ENCODE measurements at regions of chr3 and their contacts with region 1.

Region 1: DNA sequence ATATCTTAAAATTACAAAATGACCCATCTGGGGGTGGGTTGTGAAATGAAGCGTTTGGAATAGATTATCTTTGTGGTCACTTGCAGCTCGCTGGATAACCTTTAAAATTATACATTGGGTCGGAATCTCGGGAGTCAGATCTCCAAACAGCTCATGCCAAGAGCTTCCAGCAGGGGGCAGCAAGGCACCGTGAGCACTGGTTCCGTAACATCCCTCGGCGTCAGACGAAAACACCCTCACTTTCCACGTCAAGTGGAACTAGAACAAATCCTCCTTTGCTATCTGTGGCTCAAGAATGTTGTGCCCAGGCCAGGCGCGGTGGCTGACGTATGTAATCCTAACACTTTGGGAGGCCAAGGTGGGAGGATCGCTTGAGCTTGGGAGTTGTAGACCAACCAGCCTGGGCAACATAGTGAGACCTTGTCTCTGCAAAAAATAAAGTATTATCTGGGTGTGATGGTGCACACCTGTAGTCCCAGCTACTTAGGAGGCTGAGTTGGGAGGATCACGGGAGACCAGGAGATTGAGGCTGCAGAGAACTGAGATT is 31.1 kb downstream of the UMPS start:
- DNase-seq: peak; percentile 79
- CTCF ChIP-seq: peak; percentile 92

Region 2: GRCh38 chr3:124333931-124334640 is 427.2 kb before region 1 on chr3:
- in situ Hi-C with region 1: no loop called
- DNase-seq: no peak
- CTCF ChIP-seq: no peak

Region 3: DNA sequence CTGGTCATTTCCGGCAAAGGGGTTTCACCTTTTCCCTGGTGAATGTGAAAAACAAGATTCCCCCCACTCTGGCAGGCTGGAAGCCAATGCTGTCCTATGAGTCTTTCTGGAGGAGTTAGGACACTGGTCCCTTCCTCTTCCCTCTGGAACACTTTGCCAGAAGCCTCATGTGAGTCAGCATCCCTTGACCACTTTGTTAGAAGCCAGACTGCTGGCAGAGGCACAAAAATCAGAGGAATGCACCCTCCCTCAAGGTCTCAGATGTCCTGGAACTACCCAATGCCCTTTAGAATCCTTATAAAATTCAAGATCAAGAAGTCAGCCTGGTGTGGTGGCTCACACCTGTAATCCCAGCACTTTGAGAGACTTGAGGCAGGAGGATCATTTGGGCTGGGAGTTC is 99.3 kb after region 1 on chr3:
- in situ Hi-C with region 1: no loop called
- DNase-seq: no peak
- CTCF ChIP-seq: no peak

Region 4: DNA sequence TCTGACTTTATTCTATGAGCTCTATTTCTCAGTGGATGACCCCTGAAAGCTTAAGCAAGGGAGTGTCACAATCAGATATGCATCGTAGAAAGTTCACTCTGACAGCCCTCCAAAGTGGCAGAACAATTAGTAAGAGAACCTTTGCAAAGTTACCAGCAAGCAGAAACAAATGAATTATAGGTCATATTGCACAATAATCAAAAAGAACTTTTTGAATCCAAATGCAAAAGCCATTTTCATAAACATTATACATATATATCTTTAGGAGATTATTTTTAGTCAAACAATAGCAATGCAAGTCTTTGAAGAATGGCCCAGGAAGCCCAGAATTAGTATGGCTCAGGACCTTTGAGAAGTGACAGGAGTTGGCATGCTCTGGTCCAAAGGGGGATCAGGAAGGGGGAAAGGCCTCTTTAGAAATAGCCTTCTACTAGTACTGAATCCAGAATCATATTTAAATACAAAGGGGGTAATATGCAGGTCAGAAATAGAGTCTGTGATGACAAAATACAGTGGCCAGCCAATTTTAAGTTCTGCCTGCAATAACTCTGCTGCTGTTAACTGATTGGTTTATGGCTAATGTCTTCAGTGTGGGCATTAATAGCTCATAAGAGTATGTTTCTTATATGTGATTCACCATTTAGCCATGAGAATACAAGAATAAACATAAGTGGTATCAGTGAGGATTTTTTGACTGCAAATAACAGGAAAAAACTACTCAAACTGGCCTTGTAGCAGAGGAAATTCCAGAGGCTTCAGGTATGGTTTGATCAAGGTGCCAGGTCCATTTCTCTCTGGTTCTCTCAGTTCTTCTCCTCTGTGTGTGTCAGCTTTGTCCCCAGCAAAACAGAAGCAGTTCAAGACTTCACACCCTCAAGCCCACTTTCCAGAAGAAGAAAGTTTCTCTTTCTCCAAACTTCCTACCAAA is 142.8 kb after region 1 on chr3:
- in situ Hi-C with region 1: loop called (anchors 5 kb)
- DNase-seq: no peak
- CTCF ChIP-seq: no peak

Region 5: DNA sequence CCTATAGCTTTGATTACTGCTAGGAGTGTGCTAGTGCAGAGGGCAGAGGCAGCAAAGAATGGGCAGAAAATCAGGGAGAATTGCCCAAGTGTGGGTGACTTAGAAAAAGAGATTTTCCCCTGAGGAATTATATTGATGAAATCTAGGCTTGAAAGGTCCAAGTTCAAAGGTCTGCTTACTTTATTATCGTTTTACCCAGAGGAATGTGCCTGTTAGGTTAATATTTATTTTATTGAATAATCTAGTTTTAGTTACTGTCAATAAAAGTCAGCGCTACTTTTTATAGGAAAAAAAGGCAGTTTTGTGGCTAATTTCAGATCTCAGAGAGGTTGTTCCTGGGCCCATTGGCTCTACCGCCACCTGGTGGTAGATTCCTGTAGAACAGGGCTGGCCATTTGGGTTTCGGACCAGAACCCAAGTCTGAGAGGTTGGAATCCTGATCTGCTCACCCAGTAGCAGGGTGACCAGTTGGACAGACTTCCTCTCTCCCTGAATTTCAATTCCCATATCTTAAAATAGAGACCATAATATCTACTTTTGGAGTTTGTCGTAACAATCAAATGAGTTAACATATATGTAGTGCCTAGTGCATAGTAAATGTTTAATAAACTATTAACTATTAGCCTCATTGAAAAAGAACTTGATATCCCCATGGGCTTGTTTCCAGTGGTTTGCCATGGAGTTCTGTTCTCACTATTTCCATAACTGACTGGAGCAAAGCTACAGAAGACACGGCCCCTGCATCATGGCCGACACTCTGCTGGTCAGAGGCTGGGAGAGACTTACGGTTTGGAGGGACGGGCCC is 676.5 kb after region 1 on chr3:
- in situ Hi-C with region 1: loop called (anchors 25 kb)
- DNase-seq: peak; percentile 40
- CTCF ChIP-seq: peak; percentile 91

Measured in GM13977 (cell line).